ENCODE measurements at regions of chr17 and their contacts with region 1.

Region 1: DNA sequence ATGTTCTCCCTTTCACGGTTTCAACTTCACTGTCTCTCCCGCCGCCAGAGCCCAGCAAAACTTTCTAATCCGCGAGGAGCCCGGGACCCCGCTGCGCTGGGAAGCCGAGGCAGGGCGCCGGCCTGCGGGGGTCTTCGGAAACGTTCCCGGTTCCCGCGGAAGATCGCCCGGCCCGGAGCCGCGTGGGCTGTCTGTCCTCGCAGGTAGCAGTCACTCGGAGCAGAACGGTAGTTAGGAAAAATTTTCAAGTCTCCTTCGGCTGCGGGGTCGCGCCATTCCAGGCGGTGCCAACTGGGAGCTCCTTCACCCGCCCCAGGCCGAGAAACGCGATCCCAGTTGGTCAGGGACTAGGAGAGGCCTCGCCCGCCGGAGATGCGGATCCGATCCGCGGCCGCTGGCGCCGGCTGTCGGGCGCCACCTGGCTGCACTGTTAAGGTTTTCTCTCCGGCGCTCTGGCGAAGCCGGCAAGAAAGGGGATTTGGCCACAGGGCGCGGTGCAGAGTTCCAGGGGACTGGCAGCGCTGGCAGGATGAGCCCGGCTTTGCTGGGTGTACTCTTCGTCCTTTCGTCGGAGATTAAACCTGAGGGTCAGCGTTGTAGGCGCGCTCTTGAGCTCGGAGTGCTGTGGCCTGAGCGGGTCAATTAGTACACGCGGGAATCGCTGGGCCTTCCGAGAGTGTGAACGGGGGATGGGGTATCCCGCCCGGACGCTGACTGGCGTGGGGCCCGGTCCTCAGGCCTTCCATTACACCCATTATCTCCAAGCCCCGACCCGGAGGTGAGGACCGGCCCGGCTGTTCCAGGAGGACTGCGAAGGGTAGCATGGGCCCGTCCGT is 135.4 kb downstream of the KCNJ12 start:
- DNase-seq: peak; percentile 75
- ATAC-seq: peak; percentile 95
- H3K4me3 ChIP-seq: peak overlapping the region; percentile 41
- H3K27ac ChIP-seq: no peak overlapping the region
- H3K4me1 ChIP-seq: no peaks in the 10 kb centered on the region
- H3K27me3 ChIP-seq: peaks cover 15% of the 10 kb centered on the region
- CTCF ChIP-seq: peak; percentile 80
- POLR2A ChIP-seq: no peak
- RAD21 ChIP-seq: peak; percentile 72

Region 2: DNA sequence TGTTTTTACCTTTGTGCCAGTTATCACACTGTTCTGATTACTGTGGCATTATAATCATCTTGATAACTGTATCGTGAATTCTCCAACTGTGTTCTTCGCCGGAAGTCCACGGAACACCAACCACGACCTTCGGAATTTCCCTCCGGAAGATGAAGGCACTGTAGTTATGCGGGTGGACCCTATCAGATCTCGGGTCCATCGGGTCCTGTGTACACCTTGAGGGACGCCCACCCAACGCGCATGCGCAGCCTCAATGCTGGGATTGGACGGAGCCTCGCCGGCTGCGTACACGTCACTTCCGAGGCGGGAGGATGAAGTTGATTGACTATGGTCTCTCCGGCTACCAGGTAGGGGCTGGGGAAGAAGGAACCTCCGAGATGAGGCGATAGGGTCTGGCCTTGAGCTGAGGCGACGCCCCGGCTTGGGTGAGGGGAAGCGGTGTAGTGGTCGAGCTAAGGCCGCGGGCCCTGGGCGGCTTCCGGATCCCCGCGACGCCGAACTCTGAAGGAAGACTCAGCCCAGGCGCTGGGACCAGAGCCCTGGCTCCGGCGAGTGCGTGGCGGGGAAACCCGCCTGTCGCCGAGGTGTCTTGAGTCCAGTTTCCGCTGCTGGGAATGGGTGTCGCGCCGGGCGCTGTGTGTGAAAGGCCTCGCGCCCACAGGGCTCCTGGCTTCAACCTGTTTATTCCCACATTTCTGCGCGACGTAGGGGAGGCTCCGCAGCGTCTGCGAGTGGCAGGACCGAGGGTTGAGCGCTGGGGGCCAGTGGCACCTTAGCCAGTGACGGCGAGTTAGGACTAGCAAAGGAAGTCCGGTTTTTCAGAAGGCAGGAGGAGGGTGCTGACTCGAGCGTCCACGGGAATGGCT is 384.7 kb before region 1 on chr17 and contains the start of gene DHRS7B:
- CTCF ChIA-PET with region 1: interaction called, 4 read pairs
- POLR2A ChIA-PET with region 1: no interaction called
- dilution Hi-C with region 1: no loop called
- in situ Hi-C with region 1: loop called (anchors 5 kb)
- intact Hi-C with region 1: loop called (anchors 2 kb)
- DNase-seq: peak; percentile 88
- ATAC-seq: peak; percentile 93
- H3K4me3 ChIP-seq: peak within 1 kb of the TSS; percentile 64
- H3K27ac ChIP-seq: peak within 1 kb of the TSS; percentile 62
- H3K4me1 ChIP-seq: no peaks in the 10 kb centered on the region
- H3K27me3 ChIP-seq: no peaks in the 10 kb centered on the region
- CTCF ChIP-seq: no peak
- POLR2A ChIP-seq: peak; percentile 70
- RAD21 ChIP-seq: no peak
- total RNA-seq, gene DHRS7B: 24.2 and 34.4 TPM in 2 replicates

Region 3: DNA sequence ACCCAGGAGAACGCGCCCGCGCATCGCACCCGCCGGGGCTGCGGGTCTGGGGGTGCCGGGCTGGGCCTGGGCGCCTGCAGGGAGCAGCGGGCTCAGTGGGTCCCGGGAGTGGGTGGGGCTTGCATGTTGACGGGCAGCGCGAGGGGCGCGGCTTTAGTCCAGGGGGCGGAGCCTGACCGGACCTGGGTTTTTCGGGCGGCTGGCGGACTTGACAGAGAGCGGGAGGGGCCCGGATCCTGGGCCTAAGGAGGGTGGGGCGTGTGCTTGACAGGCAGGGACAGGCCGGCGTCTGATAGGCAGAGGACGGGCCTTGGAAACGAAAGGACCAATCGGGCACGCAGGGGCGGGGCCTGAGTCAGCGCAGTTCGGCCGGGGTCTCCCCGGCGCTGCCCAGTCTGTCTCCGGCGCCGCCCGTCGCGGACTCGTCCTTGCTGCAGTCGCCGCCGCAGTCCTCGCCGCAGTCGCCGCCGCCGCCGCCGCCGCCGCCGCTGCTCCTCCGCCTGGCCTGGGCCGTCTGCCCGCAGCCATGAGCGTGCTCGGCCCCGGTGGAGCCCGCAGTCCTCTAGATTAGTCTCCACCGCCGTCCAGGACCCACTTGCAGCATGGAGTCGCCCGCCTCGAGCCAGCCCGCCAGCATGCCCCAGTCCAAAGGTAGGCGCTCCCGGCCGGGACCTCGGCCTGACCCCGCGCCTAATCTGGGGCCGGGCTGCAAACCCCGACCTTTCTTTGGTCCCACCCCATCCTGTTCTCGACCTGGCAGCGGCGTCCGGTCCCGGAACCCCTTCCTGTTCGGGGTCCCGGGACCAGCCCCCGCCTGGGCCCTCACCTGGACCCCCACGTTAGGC is 227.0 kb before region 1 on chr17 and contains the start of gene MAP2K3:
- CTCF ChIA-PET with region 1: interaction called, 3 read pairs
- POLR2A ChIA-PET with region 1: no interaction called
- dilution Hi-C with region 1: no loop called
- in situ Hi-C with region 1: loop called (anchors 5 kb)
- intact Hi-C with region 1: loop called (anchors 1 kb)
- DNase-seq: peak; percentile 99
- ATAC-seq: peak; percentile 81
- H3K4me3 ChIP-seq: peak within 1 kb of the TSS; percentile 84
- H3K27ac ChIP-seq: peak within 1 kb of the TSS; percentile 83
- H3K4me1 ChIP-seq: peaks cover 47% of the 10 kb centered on the region
- H3K27me3 ChIP-seq: no peaks in the 10 kb centered on the region
- CTCF ChIP-seq: no peak
- POLR2A ChIP-seq: peak; percentile 97
- RAD21 ChIP-seq: no peak
- total RNA-seq, gene MAP2K3: 23.5 and 25.0 TPM in 2 replicates

Region 4: GRCh38 chr17:21318439-21318838 is 193.1 kb before region 1 on chr17:
- CTCF ChIA-PET with region 1: no interaction called
- POLR2A ChIA-PET with region 1: no interaction called
- dilution Hi-C with region 1: no loop called
- in situ Hi-C with region 1: no loop called
- intact Hi-C with region 1: loop called (anchors 5 kb)
- DNase-seq: no peak
- ATAC-seq: no peak
- H3K4me3 ChIP-seq: no peak overlapping the region
- H3K27ac ChIP-seq: no peak overlapping the region
- H3K4me1 ChIP-seq: no peaks in the 10 kb centered on the region
- H3K27me3 ChIP-seq: no peaks in the 10 kb centered on the region
- CTCF ChIP-seq: no peak
- POLR2A ChIP-seq: no peak
- RAD21 ChIP-seq: no peak

Region 5: GRCh38 chr17:21457051-21458026 is 54.2 kb before region 1 on chr17:
- CTCF ChIA-PET with region 1: interaction called, 27 read pairs
- POLR2A ChIA-PET with region 1: no interaction called
- dilution Hi-C with region 1: no loop called
- in situ Hi-C with region 1: loop called (anchors 5 kb)
- intact Hi-C with region 1: loop called (anchors 1 kb)
- DNase-seq: peak; percentile 89
- ATAC-seq: peak; percentile 97
- H3K4me3 ChIP-seq: no peak overlapping the region
- H3K27ac ChIP-seq: no peak overlapping the region
- H3K4me1 ChIP-seq: peaks cover 4% of the 10 kb centered on the region; the same call in 1 of the 2 replicates
- H3K27me3 ChIP-seq: peaks cover 42% of the 10 kb centered on the region
- CTCF ChIP-seq: peak; percentile 89
- POLR2A ChIP-seq: no peak
- RAD21 ChIP-seq: peak; percentile 74

Region 6: GRCh38 chr17:21463779-21464407 is 47.7 kb before region 1 on chr17:
- CTCF ChIA-PET with region 1: interaction called, 3 read pairs
- POLR2A ChIA-PET with region 1: no interaction called
- dilution Hi-C with region 1: no loop called
- in situ Hi-C with region 1: loop called (anchors 5 kb)
- intact Hi-C with region 1: no loop called
- DNase-seq: no peak
- ATAC-seq: no peak
- H3K4me3 ChIP-seq: no peak overlapping the region
- H3K27ac ChIP-seq: no peak overlapping the region
- H3K4me1 ChIP-seq: no peaks in the 10 kb centered on the region; the same call in 1 of the 2 replicates
- H3K27me3 ChIP-seq: peaks cover 57% of the 10 kb centered on the region
- CTCF ChIP-seq: no peak
- POLR2A ChIP-seq: no peak
- RAD21 ChIP-seq: no peak

Region 7: GRCh38 chr17:21535686-21536375 is 24.2 kb after region 1 on chr17:
- CTCF ChIA-PET with region 1: no interaction called
- POLR2A ChIA-PET with region 1: no interaction called
- dilution Hi-C with region 1: no loop called
- in situ Hi-C with region 1: no loop called
- intact Hi-C with region 1: no loop called
- DNase-seq: no peak
- ATAC-seq: no peak; the same call in 1 of the 2 replicates
- H3K4me3 ChIP-seq: no peak overlapping the region
- H3K27ac ChIP-seq: no peak overlapping the region
- H3K4me1 ChIP-seq: no peaks in the 10 kb centered on the region; the same call in 1 of the 2 replicates
- H3K27me3 ChIP-seq: no peaks in the 10 kb centered on the region
- CTCF ChIP-seq: no peak
- POLR2A ChIP-seq: no peak
- RAD21 ChIP-seq: no peak